H1 (cell line): ENCODE measurements at regions of chr10 and their contacts with region 1.

Region 1: GRCh38 chr10:93376372-93377293 is 105.5 kb downstream of the MYOF start:
- DNase-seq: no peak
- H3K4me3 ChIP-seq: no peak overlapping the region
- H3K27ac ChIP-seq: no peak overlapping the region
- H3K4me1 ChIP-seq: 0 out of 7 replicates have a peak, but pooled peaks cover 0 to 3% (median 0%) of the 10 kb centered on the region in 4 experiments
- H3K27me3 ChIP-seq: no peaks in the 10 kb centered on the region; a peak in 1 of 7 replicates
- CTCF ChIP-seq: peak in 2 of 3 experiments; percentile 91 to 93; a peak in 3 of 4 replicates
- EP300 ChIP-seq: no peak
- POLR2A ChIP-seq: no peak
- RAD21 ChIP-seq: peak; percentile 98 to 99

Region 2: DNA sequence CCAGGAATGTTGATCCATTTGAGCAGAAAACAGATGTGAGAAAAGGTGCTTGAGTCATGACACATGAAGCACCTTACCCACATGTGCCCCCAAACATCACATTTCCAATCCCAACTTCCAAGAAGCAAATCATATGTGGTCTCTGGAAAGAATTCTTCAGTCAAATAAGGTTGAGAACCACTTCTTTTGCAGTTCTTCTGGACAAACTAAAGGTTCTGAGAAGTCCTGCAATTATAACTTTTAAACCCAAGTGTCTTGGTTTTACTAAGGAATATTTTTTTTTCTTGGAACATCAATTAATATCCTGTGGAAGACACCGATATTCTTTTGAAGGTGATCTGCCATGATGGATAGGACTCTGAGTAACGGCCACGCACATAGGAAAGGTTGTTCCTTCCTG is 45.8 kb before region 1 on chr10:
- CTCF ChIA-PET with region 1: no interaction called
- POLR2A ChIA-PET with region 1: no interaction called
- DNase-seq: no peak
- H3K4me3 ChIP-seq: no peak overlapping the region
- H3K27ac ChIP-seq: no peak overlapping the region
- H3K4me1 ChIP-seq: peaks cover 0 to 6% (median 3%) of the 10 kb centered on the region in 4 experiments; a peak in 4 of 7 replicates
- H3K27me3 ChIP-seq: no peaks in the 10 kb centered on the region
- CTCF ChIP-seq: no peak
- EP300 ChIP-seq: no peak
- POLR2A ChIP-seq: no peak
- RAD21 ChIP-seq: no peak

Region 3: DNA sequence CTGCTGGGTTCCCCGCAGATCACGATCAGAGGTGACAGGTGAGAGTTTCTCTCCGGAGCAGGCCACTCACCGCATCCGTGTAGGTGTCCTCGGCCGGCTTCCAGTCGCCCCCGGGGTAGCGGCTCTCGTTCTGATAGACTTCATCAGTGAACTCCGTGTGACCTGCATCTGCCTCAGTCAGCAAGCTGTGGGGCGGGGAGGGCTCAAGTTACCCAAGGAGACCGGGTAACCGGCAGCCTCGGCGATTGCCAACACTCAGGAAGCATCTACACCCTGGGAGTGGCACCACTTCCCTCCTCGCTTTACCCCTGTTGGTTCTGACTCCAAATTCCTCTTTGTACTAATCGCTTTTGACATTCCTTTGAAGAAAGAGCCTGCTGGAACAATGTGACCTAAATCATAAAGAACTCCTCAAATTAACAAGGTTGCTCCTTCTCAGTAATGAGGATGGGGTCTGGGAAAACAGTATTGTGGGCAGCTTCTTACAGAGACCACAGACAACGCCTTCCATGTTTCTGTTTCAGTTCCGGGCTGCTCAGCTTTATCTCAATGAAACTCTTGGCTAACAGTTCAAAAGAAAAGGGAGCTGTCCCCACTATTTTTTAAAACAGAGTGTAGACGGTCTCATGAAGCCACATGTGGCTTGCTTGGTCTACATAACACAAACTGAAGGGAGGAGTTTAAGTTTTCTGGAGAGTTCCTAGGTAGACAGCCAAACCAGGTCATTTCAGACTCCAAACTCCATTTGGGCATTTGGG is 12.6 kb before region 1 on chr10:
- CTCF ChIA-PET with region 1: interaction called, 24 read pairs
- POLR2A ChIA-PET with region 1: no interaction called
- DNase-seq: no peak
- H3K4me3 ChIP-seq: no peak overlapping the region
- H3K27ac ChIP-seq: no peak overlapping the region
- H3K4me1 ChIP-seq: peaks cover 0 to 6% (median 0%) of the 10 kb centered on the region in 4 experiments; a peak in 1 of 7 replicates
- H3K27me3 ChIP-seq: no peaks in the 10 kb centered on the region
- CTCF ChIP-seq: no peak
- EP300 ChIP-seq: no peak
- POLR2A ChIP-seq: no peak
- RAD21 ChIP-seq: no peak

Region 4: DNA sequence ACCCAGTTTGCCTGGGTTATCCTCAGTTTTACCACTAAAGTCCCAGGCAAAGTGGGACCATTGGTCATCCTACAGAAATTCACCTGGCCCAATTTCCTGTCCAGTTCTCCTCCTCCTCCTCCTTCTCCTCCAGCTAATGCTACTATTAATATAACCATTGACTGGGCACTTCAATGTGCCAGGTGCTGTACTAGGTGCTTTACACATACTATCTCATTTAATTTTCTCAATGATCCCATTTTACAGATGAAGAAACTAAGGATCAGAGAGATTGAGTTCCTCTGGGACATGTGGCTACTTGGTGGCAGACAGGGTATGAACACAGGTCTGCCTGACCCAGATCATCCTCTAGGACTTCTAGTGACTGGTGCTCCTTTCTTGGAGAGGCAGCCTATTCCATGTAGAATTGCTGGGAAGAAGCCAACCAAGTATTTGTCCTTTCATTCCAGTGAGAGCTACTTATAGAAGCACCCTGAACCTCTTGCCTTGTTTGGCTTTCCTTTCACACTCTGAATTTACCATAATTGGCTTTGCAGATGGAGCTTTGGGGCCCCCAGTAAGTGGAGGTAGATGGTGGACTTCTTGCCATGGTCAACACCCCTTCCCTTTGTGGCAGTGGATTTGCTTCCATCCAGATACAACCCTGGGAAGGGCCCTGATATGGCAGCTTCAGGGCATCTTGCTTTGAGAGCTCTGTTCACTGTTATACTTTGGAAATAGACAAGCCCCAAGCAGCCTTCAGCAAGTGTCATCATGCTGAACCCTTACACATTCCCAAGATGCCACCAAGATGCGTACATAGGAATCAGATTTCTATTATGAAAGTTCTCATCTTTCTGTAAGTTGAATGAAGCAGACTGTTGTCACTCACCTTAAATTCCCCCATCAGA is 26.8 kb after region 1 on chr10:
- CTCF ChIA-PET with region 1: interaction called, 18 read pairs
- POLR2A ChIA-PET with region 1: interaction called, 3 read pairs
- DNase-seq: no peak
- H3K4me3 ChIP-seq: no peak overlapping the region
- H3K27ac ChIP-seq: no peak overlapping the region
- H3K4me1 ChIP-seq: no peaks in the 10 kb centered on the region
- H3K27me3 ChIP-seq: no peaks in the 10 kb centered on the region
- CTCF ChIP-seq: no peak
- EP300 ChIP-seq: no peak
- POLR2A ChIP-seq: no peak
- RAD21 ChIP-seq: no peak

Region 5: GRCh38 chr10:93458821-93459257 is 82.2 kb after region 1 on chr10:
- CTCF ChIA-PET with region 1: interaction called, 22 read pairs
- POLR2A ChIA-PET with region 1: no interaction called
- DNase-seq: no peak
- H3K4me3 ChIP-seq: no peak overlapping the region
- H3K27ac ChIP-seq: no peak overlapping the region
- H3K4me1 ChIP-seq: peaks cover 0 to 5% (median 2%) of the 10 kb centered on the region in 4 experiments; a peak in 3 of 7 replicates
- H3K27me3 ChIP-seq: no peaks in the 10 kb centered on the region
- CTCF ChIP-seq: no peak
- EP300 ChIP-seq: no peak
- POLR2A ChIP-seq: no peak
- RAD21 ChIP-seq: no peak

Region 6: DNA sequence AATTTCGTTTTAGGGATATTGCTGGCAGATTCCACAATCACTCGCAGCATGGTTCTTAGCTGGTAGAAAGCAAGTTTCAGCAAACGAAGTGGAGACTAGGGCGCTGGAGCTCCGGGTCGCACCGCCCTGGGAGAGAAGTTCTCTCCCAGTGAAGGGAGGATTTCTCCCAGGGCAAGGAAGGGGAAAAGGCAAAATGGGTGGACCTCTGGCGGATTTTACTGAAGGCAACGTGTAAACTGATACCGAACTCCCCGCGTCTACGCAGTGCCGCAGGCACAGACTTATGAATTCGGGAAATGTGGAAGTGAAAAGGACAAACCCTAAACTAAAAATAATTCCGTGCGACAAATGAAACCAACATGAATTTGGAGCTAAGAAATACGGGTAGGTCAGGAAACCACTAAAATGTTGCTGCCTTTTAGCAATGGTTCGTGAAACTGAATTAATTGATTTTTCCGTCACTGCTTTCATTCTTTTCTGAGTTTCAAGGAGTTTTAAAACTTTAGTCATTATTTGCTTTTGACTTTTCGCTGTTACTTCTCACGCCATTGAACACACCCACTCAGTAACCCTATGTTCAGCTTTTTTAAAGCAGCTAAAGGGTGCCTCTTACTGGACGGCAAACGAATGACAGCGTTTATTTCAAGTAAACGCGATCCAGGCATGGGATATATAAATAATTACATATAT is 105.7 kb after region 1 on chr10 and contains the start of gene MYOF:
- CTCF ChIA-PET with region 1: interaction called, 513 read pairs
- POLR2A ChIA-PET with region 1: interaction called, 4 read pairs
- DNase-seq: peak in 1 of 2 experiments; percentile 59
- H3K4me3 ChIP-seq: peak within 1 kb of the TSS; percentile 66 to 82 (median 73); a peak in 7 of 8 replicates
- H3K27ac ChIP-seq: no peak within 1 kb of the TSS
- H3K4me1 ChIP-seq: peaks cover 0 to 2% (median 0%) of the 10 kb centered on the region in 4 experiments; a peak in 1 of 7 replicates
- H3K27me3 ChIP-seq: peaks cover 0 to 5% (median 0%) of the 10 kb centered on the region in 4 experiments; a peak in 4 of 7 replicates
- CTCF ChIP-seq: peak in 2 of 3 experiments; percentile 52 to 71; a peak in 3 of 4 replicates
- EP300 ChIP-seq: no peak
- POLR2A ChIP-seq: no peak
- RAD21 ChIP-seq: peak; percentile 90
- total RNA-seq, gene MYOF: 2.3 and 3.2 TPM in 2 replicates

Region 7: DNA sequence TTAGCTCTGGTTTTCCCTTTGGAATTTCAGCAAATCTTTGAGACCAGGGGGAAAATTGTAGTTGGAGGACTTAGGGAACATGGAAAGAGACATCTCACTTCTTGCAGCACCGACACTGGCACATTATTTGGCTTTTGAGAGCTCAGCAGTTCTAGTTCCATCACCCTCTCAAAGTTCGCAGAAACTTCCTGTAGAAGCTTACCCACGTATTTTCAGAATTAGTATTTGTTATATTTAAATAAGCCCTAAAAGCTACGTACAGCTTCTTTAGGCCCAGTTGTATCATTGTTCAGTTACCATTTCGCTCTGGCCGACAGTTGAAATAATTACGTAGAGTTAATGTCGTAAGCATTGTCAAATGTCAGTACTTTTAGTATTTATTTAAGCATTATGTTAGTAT is 133.2 kb after region 1 on chr10:
- CTCF ChIA-PET with region 1: interaction called, 105 read pairs
- POLR2A ChIA-PET with region 1: no interaction called
- DNase-seq: no peak
- H3K4me3 ChIP-seq: no peak overlapping the region
- H3K27ac ChIP-seq: no peak overlapping the region
- H3K4me1 ChIP-seq: no peaks in the 10 kb centered on the region; a peak in 1 of 7 replicates
- H3K27me3 ChIP-seq: no peaks in the 10 kb centered on the region
- CTCF ChIP-seq: no peak
- EP300 ChIP-seq: no peak
- POLR2A ChIP-seq: no peak
- RAD21 ChIP-seq: no peak